H1 (cell line): ENCODE measurements at regions of chr13 and their contacts with region 1.

Region 1: DNA sequence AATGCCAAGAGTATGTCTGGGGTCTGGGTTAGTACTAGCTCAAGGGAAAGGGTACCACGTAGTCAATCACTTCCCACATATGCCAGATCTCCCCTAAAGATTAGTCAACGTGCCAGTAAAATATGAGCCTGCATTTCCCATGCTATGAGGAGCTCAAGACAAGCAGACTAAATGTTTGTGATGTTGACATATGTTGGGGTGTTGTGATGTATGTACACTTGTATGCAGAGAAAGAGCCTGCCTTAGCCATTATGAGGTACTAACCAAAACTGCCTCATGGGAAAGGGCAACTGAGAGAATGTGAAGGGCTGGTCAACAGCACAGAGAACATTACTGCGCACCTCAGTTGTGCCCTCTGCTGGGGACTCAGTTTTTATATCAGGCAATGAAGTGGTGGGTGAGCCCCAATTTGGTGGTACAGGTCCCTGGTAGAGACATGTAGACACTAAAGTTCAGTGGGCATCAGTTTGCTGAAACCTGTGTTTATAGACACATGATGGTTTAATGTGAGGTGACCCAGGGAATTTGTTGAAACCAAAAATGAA is 287.0 kb downstream of the DCT start:
- DNase-seq: peak in 1 of 2 experiments; percentile 74
- H3K4me3 ChIP-seq: no peak overlapping the region
- H3K27ac ChIP-seq: no peak overlapping the region
- H3K4me1 ChIP-seq: peaks cover 2 to 9% (median 7%) of the 10 kb centered on the region in 4 experiments; a peak in 4 of 7 replicates
- H3K27me3 ChIP-seq: no peaks in the 10 kb centered on the region; a peak in 1 of 7 replicates
- CTCF ChIP-seq: peak; percentile 61 to 82 (median 68)
- EP300 ChIP-seq: no peak
- POLR2A ChIP-seq: no peak
- RAD21 ChIP-seq: peak; percentile 86 to 87

Region 2: GRCh38 chr13:93248627-93249047 is 943.9 kb before region 1 on chr13:
- CTCF ChIA-PET with region 1: interaction called, 13 read pairs
- POLR2A ChIA-PET with region 1: no interaction called
- DNase-seq: no peak
- H3K4me3 ChIP-seq: no peak overlapping the region
- H3K27ac ChIP-seq: no peak overlapping the region
- H3K4me1 ChIP-seq: peaks cover 8 to 23% (median 13%) of the 10 kb centered on the region in 4 experiments
- H3K27me3 ChIP-seq: no peaks in the 10 kb centered on the region
- CTCF ChIP-seq: peak; percentile 73 to 84 (median 84)
- EP300 ChIP-seq: no peak
- POLR2A ChIP-seq: no peak
- RAD21 ChIP-seq: peak; percentile 90 to 96

Region 3: DNA sequence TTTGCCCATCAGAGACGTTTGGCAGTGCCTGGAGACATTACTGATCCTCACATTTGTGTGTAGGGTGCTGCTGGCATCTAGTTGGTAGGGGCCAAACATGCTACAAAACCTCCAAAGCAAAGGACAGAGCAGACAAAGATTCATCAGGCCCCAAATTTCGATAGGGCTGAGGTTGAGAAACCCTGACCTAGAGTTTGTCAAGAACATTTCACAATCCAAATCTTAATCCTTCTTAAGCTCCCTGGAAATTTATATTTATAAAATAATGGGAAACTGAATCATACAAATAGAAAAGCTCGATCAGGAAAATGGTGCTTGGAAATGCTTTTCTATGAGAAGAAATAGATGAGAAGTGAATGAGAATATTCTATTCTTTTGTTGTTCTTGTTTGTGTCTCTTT is 13.4 kb after region 1 on chr13:
- CTCF ChIA-PET with region 1: interaction called, 15 read pairs
- POLR2A ChIA-PET with region 1: no interaction called
- DNase-seq: no peak
- H3K4me3 ChIP-seq: no peak overlapping the region
- H3K27ac ChIP-seq: no peak overlapping the region
- H3K4me1 ChIP-seq: no peaks in the 10 kb centered on the region
- H3K27me3 ChIP-seq: no peaks in the 10 kb centered on the region
- CTCF ChIP-seq: no peak
- EP300 ChIP-seq: no peak
- POLR2A ChIP-seq: no peak
- RAD21 ChIP-seq: no peak

Region 4: GRCh38 chr13:94243551-94243950 is 51.0 kb after region 1 on chr13:
- CTCF ChIA-PET with region 1: no interaction called
- POLR2A ChIA-PET with region 1: no interaction called
- DNase-seq: no peak
- H3K4me3 ChIP-seq: no peak overlapping the region
- H3K27ac ChIP-seq: no peak overlapping the region
- H3K4me1 ChIP-seq: no peaks in the 10 kb centered on the region
- H3K27me3 ChIP-seq: no peaks in the 10 kb centered on the region
- CTCF ChIP-seq: no peak
- EP300 ChIP-seq: no peak
- POLR2A ChIP-seq: no peak
- RAD21 ChIP-seq: no peak

Region 5: GRCh38 chr13:94362411-94362909 is 170.0 kb after region 1 on chr13:
- CTCF ChIA-PET with region 1: interaction called, 13 read pairs
- POLR2A ChIA-PET with region 1: no interaction called
- DNase-seq: peak; percentile 49 to 65
- H3K4me3 ChIP-seq: no peak overlapping the region
- H3K27ac ChIP-seq: no peak overlapping the region
- H3K4me1 ChIP-seq: no peaks in the 10 kb centered on the region
- H3K27me3 ChIP-seq: no peaks in the 10 kb centered on the region
- CTCF ChIP-seq: peak; percentile 52 to 84 (median 70)
- EP300 ChIP-seq: no peak
- POLR2A ChIP-seq: no peak
- RAD21 ChIP-seq: peak; percentile 97 to 98